Psoas muscle (tissue), 8 donors: ENCODE measurements at regions of chr13 and their contacts with region 1.

Region 1: DNA sequence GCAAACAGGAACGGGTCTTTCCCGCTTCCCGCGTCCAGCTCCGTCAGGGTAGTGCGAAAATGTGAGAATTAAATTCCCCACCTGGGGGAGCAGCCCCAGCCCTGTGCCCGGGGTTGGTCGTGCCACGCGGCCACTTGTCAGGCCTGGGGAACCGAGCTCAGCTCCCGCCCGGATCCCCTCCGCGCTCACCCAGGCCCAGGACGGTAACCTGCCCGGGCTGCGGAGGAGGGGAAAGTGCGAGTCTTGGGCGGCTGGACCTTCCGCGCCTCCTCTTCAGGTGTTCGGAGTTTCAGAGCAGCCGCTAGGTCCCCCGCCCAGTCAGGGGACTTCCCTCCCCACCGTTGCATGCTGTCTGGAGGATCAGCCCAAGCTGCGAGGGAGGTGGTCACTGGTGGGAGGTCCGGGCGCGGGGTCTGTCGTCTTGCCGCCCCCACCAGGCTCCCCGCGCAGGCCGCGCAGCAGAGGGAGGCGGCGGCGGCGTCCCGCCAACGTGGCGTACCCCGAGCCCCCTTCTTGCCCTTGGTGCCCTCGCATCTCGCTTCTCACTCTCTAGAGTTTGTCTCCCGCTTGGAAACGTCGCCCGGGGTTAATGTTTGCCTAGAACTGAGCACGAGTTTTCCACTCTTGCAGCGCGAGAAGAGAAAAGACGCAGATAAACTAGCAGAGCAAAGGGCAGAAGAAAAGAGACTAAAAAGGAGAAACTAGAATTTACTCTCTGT is 8.1 kb downstream of the URAD start:
- DNase-seq: no peak
- ATAC-seq: no peak
- H3K4me3 ChIP-seq: no peak overlapping the region
- H3K27ac ChIP-seq: no peak overlapping the region
- H3K4me1 ChIP-seq: no peaks in the 10 kb centered on the region
- H3K27me3 ChIP-seq: peaks cover 2 to 84% (median 43%) of the 10 kb centered on the region in 3 donors
- CTCF ChIP-seq: no peak

Region 2: GRCh38 chr13:27362064-27362883 is 618.2 kb before region 1 on chr13:
- intact Hi-C with region 1: loop called (anchors 5 kb)
- DNase-seq: peak; percentile 84 to 91
- ATAC-seq: peak; percentile 96 to 99 (median 96)
- H3K4me3 ChIP-seq: peak overlapping the region; percentile 60
- H3K27ac ChIP-seq: no peak overlapping the region
- H3K4me1 ChIP-seq: no peaks in the 10 kb centered on the region
- H3K27me3 ChIP-seq: peaks cover 0 to 18% (median 0%) of the 10 kb centered on the region in 3 donors
- CTCF ChIP-seq: peak; percentile 93